ENCODE measurements at regions of chr9 and their contacts with region 1.

Region 1: DNA sequence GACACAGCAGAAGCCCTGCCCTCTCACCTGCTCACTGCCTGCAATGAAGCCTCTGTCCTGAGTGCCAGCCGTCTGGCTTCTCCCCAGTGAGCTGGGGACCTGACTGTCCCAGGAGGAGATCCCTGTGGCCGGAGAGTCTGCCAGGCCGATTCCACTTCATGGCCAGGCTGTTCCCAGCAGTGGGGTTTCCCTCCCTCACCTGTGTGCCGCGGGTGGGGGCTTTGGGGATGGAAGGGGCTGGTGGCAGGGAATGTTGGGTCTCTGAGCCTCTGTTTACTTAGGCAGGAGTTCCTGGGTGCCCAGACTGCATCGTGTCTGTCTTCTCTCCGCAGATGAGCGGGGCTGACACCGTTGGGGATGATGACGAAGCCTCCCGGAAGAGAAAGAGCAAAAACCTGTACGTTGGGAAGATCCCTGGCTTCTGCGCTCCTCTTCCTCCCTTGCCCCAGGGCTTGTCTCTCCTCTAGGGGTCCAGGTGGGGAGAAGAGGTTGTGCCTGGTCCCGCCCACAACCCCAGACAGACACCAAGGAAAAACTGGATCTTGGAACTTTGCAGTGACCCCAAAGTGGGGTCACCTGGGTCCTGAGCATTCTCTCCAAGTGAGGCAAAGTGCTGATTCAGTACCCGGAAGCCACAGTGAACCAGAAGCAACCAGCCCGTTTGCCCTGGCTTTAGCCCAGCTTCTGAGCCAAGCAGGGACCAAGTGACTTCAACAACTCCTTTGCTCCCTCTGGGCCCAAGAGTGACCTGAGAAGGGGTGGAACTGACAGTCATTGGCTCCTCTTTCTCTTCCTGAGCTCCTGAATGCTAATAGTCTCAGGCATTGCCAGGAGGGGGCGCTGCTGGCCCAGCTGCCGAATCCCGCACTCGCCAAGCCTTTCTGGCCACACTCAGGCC is 127.7 kb downstream of the RGS3 start:
- DNase-seq: peak; percentile 58
- H3K4me3 Mint-ChIP-seq: no peak overlapping the region
- H3K27ac Mint-ChIP-seq: no peak overlapping the region
- H3K4me1 Mint-ChIP-seq: peaks cover 56% of the 10 kb centered on the region
- H3K27me3 Mint-ChIP-seq: no peaks in the 10 kb centered on the region

Region 2: DNA sequence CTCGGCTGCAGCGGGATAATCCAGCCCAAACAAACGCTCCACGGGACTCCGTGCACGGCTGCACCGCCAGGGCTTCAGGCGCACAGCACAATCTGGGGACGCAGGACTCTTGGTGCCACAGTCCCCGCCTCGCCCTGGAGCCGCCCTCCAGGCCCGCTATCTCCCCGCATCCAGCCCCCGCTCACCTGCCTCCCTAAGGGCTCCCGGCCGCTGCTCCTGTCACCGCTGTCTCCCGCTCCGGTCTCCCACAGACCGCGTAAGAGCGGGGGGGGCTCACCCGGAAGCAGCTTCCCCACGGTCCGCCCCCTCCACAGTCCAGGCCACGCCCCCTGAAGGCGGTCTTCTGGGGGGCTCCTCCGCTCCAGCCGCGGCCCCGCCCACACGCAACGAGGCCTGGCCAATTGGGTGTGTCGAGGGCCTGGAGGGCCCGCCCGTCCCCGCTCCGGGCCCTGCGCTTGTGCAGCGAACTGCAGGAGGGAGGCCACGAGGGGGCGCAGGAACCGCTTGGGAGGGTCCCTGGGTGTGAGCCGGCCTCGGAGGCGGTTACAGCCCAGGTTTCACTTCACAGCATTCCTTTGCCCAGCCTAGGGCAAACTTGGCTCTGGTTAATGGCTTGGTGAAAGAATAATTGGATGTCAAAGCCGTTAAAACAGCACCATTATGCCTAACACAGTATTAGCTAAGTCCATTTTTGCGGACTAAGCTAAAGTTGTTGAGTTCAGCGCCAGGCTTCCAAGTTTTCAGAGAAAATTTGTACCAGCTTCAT is 190.0 kb before region 1 on chr9 and contains the start of gene ALAD:
- CTCF ChIA-PET with region 1: interaction called, 14 read pairs
- POLR2A ChIA-PET with region 1: no interaction called
- DNase-seq: peak; percentile 99
- H3K4me3 Mint-ChIP-seq: peak within 1 kb of the TSS; percentile 89
- H3K27ac Mint-ChIP-seq: peak within 1 kb of the TSS; percentile 93
- H3K4me1 Mint-ChIP-seq: peaks cover 26% of the 10 kb centered on the region
- H3K27me3 Mint-ChIP-seq: no peaks in the 10 kb centered on the region
- total RNA-seq, gene ALAD: 37.5 to 40.6 TPM

Region 3: DNA sequence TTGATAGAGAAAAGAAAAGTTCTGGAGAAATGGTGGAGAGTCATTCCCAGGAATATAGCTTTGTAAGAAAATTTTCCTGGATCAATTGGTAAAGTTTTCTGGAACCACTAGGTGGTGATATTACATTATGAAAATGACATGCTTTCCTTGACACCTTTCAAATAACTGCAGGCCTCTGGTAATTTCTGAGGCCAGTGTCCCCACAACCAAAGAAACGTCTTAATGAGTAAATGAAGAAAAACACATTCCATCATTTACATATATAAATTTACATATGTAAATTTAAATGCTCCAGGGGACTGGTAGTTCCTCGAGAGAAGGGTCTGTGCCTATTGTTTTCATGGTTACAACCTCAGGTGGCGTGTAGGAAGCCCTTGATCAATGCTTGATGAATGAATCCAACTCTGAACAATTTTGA is 144.9 kb before region 1 on chr9:
- CTCF ChIA-PET with region 1: interaction called, 16 read pairs
- POLR2A ChIA-PET with region 1: interaction called, 3 read pairs
- DNase-seq: no peak
- H3K4me3 Mint-ChIP-seq: no peak overlapping the region
- H3K27ac Mint-ChIP-seq: no peak overlapping the region
- H3K4me1 Mint-ChIP-seq: no peaks in the 10 kb centered on the region
- H3K27me3 Mint-ChIP-seq: no peaks in the 10 kb centered on the region

Region 4: GRCh38 chr9:113578882-113579282 is 12.4 kb before region 1 on chr9:
- CTCF ChIA-PET with region 1: interaction called, 18 read pairs
- POLR2A ChIA-PET with region 1: no interaction called
- DNase-seq: peak; percentile 91
- H3K4me3 Mint-ChIP-seq: peak overlapping the region; percentile 85
- H3K27ac Mint-ChIP-seq: peak overlapping the region; percentile 97
- H3K4me1 Mint-ChIP-seq: peaks cover 80% of the 10 kb centered on the region
- H3K27me3 Mint-ChIP-seq: no peaks in the 10 kb centered on the region

Region 5: GRCh38 chr9:113602126-113603044 is 11.1 kb after region 1 on chr9:
- CTCF ChIA-PET with region 1: interaction called, 12 read pairs
- POLR2A ChIA-PET with region 1: no interaction called
- DNase-seq: no peak
- H3K4me3 Mint-ChIP-seq: no peak overlapping the region
- H3K27ac Mint-ChIP-seq: no peak overlapping the region
- H3K4me1 Mint-ChIP-seq: peaks cover 3% of the 10 kb centered on the region
- H3K27me3 Mint-ChIP-seq: no peaks in the 10 kb centered on the region

Region 6: DNA sequence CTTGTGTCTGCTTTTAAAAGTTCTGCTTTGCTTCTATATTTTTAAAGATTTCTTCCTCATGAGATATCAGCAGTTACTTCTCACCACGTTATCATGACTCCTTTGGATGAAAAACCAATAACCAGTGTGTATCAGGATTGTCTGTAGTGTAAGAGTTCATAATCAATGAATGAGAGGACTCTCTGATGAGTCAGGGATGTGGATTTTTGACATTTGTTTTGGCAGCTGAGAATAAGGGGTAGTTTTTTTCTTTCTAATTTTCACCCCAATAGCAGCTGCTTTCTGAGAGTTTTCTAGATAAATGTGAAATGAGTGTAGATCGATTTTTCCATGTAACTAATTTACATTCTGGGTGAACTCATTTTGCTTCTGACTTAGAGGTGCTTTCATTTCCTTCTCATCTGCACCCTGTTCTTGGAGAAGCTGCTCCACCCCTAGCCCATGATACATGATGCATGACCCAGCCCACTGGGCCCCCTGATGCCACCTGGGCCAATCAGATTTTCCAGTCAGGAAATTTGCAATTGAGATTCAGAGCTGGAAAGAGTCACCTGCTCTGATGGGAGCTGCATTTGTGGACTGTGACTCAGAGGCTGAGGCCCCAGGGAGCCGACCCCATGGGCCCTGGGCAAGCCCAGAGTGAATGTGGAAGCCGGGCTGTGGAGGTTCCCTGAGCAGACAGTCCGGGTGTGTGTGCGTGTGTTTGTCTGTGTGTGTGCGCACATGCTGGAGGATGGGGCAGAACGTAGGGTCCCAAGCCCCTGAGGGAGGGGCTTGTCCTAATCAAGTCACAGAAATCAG is 31.6 kb after region 1 on chr9:
- CTCF ChIA-PET with region 1: no interaction called
- POLR2A ChIA-PET with region 1: no interaction called
- DNase-seq: no peak
- H3K4me3 Mint-ChIP-seq: no peak overlapping the region
- H3K27ac Mint-ChIP-seq: no peak overlapping the region
- H3K4me1 Mint-ChIP-seq: peaks cover 15% of the 10 kb centered on the region
- H3K27me3 Mint-ChIP-seq: no peaks in the 10 kb centered on the region

Region 7: GRCh38 chr9:113638897-113639296 is 47.6 kb after region 1 on chr9:
- CTCF ChIA-PET with region 1: no interaction called
- POLR2A ChIA-PET with region 1: no interaction called
- DNase-seq: no peak
- H3K4me3 Mint-ChIP-seq: no peak overlapping the region
- H3K27ac Mint-ChIP-seq: no peak overlapping the region
- H3K4me1 Mint-ChIP-seq: no peaks in the 10 kb centered on the region
- H3K27me3 Mint-ChIP-seq: peaks cover 14% of the 10 kb centered on the region

Region 8: DNA sequence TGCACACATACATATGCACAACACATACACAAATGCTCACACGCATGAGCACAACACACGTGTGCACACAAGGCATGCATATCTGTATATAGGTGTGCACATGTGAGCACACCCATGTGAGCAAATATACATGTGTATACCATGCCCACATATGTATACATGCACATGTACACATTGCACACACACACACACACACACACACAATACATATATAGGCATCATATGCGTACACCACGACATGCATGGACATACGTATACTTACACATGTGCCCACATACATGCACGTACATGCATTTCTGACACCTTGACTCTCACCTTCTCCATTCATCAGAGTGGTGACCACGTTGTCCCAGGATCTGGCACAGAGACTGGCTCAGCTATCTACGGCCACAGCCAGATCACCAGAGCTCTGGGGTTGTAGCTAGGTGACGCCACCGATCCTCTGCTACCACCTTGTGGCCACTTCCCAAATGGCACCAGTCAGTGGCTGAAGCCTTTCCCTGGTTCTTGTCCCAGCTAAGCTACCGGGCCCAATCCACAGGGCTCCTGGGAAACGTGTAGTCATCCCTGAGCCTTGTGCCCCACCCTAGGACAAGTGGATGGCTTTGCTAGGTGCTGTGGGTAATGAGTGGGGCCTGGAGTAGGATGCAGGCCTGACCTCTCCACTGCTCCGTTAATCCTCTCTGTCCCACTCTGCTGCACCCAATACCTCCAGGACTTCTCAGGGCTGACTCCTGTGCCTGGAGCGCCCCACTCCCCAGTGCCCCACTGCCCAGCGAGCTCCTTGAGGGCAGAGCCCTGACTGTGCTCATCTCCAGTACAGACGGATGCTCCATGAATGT is 66.7 kb after region 1 on chr9:
- CTCF ChIA-PET with region 1: interaction called, 123 read pairs
- POLR2A ChIA-PET with region 1: no interaction called
- DNase-seq: peak; percentile 79
- H3K4me3 Mint-ChIP-seq: no peak overlapping the region
- H3K27ac Mint-ChIP-seq: no peak overlapping the region
- H3K4me1 Mint-ChIP-seq: peaks cover 9% of the 10 kb centered on the region
- H3K27me3 Mint-ChIP-seq: peaks cover 25% of the 10 kb centered on the region

Region 9: DNA sequence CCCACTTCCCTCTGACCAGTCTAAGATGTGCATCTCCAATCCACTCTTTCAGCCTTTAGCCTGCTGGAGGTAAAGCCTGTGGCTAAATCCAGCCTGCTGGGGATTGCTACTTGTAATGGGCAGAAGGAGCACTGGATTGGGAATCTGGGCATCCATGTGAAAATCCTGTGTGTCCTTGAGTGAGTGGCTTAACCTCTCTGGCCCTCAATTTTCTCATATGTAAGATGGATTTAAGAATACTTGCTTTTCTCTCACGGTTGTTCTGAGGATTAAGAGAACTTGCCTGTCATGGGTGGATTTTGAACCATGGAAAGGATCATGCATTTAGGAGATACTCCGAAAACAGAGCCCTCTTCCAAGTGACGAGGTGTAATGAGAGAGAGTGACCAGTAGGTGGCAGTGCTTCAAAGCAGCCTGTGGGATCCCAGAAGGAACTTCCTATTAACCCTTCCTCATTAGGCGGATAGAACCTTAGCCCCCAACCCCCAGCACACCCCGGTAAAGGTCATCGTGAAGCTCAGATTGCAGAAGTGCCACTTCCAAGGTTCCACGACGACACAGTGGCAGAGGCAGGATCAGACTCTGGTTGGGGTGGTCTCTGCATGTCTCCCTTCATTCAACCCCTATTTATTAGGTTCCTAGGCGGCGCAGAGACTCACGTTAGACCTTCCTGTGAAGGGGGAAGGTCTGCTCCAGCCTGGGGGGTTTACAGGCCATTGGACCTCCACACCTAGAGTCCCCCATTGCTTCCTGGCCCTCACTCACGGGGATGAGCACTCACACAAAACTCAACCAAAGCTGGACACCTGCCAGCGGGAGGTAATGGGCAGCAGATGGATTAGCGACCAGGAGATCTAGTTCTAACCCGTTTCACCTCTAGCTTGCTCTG is 216.2 kb after region 1 on chr9:
- CTCF ChIA-PET with region 1: no interaction called
- POLR2A ChIA-PET with region 1: no interaction called
- DNase-seq: peak; percentile 32
- H3K4me3 Mint-ChIP-seq: no peak overlapping the region
- H3K27ac Mint-ChIP-seq: no peak overlapping the region
- H3K4me1 Mint-ChIP-seq: peaks cover 3% of the 10 kb centered on the region
- H3K27me3 Mint-ChIP-seq: peaks cover 8% of the 10 kb centered on the region

Region 10: GRCh38 chr9:113853324-113853723 is 262.1 kb after region 1 on chr9:
- CTCF ChIA-PET with region 1: no interaction called
- POLR2A ChIA-PET with region 1: no interaction called
- DNase-seq: no peak
- H3K4me3 Mint-ChIP-seq: no peak overlapping the region
- H3K27ac Mint-ChIP-seq: no peak overlapping the region
- H3K4me1 Mint-ChIP-seq: no peaks in the 10 kb centered on the region
- H3K27me3 Mint-ChIP-seq: peaks cover 5% of the 10 kb centered on the region

Measured in activated CD4-positive, alpha-beta T cell treated with anti-CD3 and anti-CD28 coated beads, Interleukin-2, amount 10 ng/mL, durations not matched to agents 7 days and 5 days (primary cell).